Activated naive CD8-positive, alpha-beta T cell treated with anti-CD3 and anti-CD28 coated beads, Interleukin-2, amount 10 ng/mL, durations not matched to agents 7 days and 5 days (primary cell): ENCODE measurements at regions of chr17 and their contacts with region 1.

Region 1: DNA sequence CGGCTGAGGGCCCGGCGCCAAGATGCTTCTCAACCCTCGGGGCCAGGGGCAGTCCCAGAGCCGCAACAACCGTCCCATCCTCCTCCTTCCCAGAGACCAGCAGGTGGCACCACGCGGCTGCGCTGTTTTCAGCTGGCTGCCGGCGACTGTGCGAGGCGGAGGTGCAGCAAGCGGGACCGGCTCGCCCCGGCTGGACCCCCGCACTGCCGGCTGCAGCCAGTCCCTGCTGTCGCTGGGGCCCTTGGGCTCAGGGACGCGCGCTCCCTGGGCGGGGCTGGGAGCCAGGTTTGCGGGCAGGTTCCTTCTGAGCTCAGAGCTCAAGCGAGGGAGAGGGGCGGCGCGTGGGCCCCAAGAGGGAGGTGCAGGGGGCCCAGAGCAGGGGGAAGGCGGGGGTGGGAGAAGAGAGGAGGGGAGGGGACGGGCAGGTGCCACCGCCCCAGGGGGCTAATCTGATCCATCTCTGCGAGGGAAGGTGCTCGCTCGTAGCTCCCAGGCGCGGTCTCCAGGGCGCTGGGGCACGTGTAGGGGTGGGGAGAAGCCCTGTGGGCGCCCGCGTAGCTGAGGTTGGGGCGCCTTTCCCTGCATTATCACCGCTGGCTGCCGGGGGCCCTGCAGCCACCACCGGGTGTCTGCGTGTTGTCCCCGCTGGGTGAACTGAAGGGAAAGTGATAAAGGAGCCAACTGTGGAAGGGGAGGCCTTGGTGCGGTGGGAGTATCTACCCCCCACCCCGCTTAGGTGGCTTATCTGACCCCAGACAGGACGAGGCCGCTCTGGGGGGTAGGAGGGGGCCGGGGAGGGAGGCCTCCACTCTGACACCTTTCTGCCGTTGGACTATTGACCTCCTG is 24.2 kb downstream of the STAT5A start:
- DNase-seq: peak; percentile 83
- ATAC-seq: peak; percentile 80
- H3K4me3 Mint-ChIP-seq: peak overlapping the region; percentile 56
- H3K27ac Mint-ChIP-seq: peak overlapping the region; percentile 65
- H3K4me1 Mint-ChIP-seq: peaks cover 54% of the 10 kb centered on the region
- H3K27me3 Mint-ChIP-seq: no peaks in the 10 kb centered on the region

Region 2: DNA sequence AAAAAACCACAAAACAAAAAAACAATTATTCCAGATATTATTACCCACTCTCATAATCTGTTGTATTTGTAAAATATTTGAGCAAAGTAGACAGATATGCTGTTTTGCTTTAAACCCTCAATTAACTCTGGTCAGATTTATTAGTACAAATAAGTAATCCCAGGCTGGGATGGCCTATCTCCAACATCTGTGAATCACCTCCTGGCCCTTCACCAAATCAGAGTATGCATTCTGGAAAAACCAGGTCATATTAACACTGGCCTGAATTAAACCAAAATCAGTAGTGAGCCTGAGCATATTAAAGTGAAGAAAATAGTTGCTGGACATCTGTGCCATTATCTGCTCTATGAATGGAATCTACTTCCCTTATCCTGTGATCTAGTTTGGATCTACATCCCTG is 34.7 kb after region 1 on chr17:
- POLR2A ChIA-PET with region 1: no interaction called
- DNase-seq: no peak
- ATAC-seq: no peak
- H3K4me3 Mint-ChIP-seq: no peak overlapping the region
- H3K27ac Mint-ChIP-seq: no peak overlapping the region
- H3K4me1 Mint-ChIP-seq: peaks cover 32% of the 10 kb centered on the region
- H3K27me3 Mint-ChIP-seq: no peaks in the 10 kb centered on the region

Region 3: GRCh38 chr17:42373896-42374295 is 61.4 kb after region 1 on chr17:
- POLR2A ChIA-PET with region 1: no interaction called
- DNase-seq: no peak
- ATAC-seq: no peak
- H3K4me3 Mint-ChIP-seq: no peak overlapping the region
- H3K27ac Mint-ChIP-seq: no peak overlapping the region
- H3K4me1 Mint-ChIP-seq: peaks cover 27% of the 10 kb centered on the region
- H3K27me3 Mint-ChIP-seq: no peaks in the 10 kb centered on the region

Region 4: GRCh38 chr17:42405963-42406495 is 93.5 kb after region 1 on chr17:
- POLR2A ChIA-PET with region 1: interaction called, 13 read pairs
- DNase-seq: peak; percentile 89
- ATAC-seq: peak; percentile 63
- H3K4me3 Mint-ChIP-seq: no peak overlapping the region
- H3K27ac Mint-ChIP-seq: no peak overlapping the region
- H3K4me1 Mint-ChIP-seq: peaks cover 17% of the 10 kb centered on the region
- H3K27me3 Mint-ChIP-seq: no peaks in the 10 kb centered on the region